ENCODE measurements at regions of chr17 and their contacts with region 1.

Region 1: DNA sequence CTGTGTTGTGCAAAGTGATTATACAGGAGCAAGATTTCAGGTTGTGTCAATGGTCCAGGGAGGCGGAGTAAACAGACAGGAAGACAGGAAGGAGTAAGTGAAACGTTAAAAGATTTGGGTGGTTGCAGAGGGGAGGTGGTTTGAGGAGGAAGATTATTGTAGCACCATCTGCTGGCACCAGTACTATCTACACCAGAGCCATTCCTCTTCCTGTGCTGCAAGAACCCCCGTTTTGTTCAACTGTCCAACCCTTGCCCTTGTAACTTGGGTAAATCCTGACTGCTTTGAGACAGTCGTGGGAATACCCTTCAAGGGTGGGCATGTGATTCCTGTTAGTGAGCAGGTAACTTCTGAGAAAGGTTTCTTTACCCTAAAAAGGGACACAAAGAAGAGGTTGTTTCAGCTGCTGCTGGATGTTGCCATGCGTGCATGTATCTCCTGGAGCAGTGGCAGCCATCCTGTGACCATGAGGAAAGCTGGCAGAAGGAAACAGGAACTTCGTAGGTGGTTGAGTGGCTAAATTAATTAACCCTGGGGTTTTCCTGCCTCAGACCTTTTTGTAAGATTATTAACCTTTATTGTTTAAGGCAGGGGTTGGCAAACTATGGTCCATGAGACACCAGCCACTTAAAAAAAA is 124.1 kb downstream of the PRKCA start:
- DNase-seq: peak in 8 of 9 donors; percentile 31 to 74 (median 64)
- ATAC-seq: peak; percentile 94
- H3K4me3 ChIP-seq: no peak overlapping the region
- H3K4me3 Mint-ChIP-seq: peak overlapping the region in 9 of 10 donors; percentile 4 to 68 (median 47)
- H3K27ac ChIP-seq: peak overlapping the region; percentile 30
- H3K27ac Mint-ChIP-seq: peak overlapping the region; percentile 56 to 91 (median 79)
- H3K4me1 ChIP-seq: peaks cover 0 to 28% of the 10 kb centered on the region in 2 donors
- H3K4me1 Mint-ChIP-seq: peaks cover 54 to 81% (median 72%) of the 10 kb centered on the region in 7 donors
- H3K27me3 ChIP-seq: no peaks in the 10 kb centered on the region
- H3K27me3 Mint-ChIP-seq: no peaks in the 10 kb centered on the region

Region 2: GRCh38 chr17:66248285-66248684 is 178.2 kb before region 1 on chr17:
- CTCF ChIA-PET with region 1: interaction called, 4 read pairs
- POLR2A ChIA-PET with region 1: interaction called, 3 read pairs
- intact Hi-C with region 1: loop called in 1 of 2 experiments (anchors 2 kb)
- DNase-seq: no peak
- ATAC-seq: no peak
- H3K4me3 ChIP-seq: no peak overlapping the region
- H3K4me3 Mint-ChIP-seq: peak overlapping the region in 3 of 10 donors; percentile 17 to 42 (median 25)
- H3K27ac ChIP-seq: no peak overlapping the region
- H3K27ac Mint-ChIP-seq: peak overlapping the region in 3 of 9 donors; percentile 54 to 89 (median 68)
- H3K4me1 ChIP-seq: peaks cover 8 to 27% of the 10 kb centered on the region in 2 donors
- H3K4me1 Mint-ChIP-seq: peaks cover 2 to 58% (median 41%) of the 10 kb centered on the region in 7 donors
- H3K27me3 ChIP-seq: no peaks in the 10 kb centered on the region
- H3K27me3 Mint-ChIP-seq: peaks cover 0 to 2% (median 0%) of the 10 kb centered on the region in 5 donors

Region 3: GRCh38 chr17:66331038-66331816 is 95.3 kb before region 1 on chr17:
- CTCF ChIA-PET with region 1: no interaction called
- POLR2A ChIA-PET with region 1: no interaction called
- intact Hi-C with region 1: loop called (anchors 1 kb)
- DNase-seq: peak in 8 of 9 donors; percentile 32 to 88 (median 76)
- ATAC-seq: peak; percentile 91
- H3K4me3 ChIP-seq: peak overlapping the region; percentile 6
- H3K4me3 Mint-ChIP-seq: peak overlapping the region; percentile 68 to 92 (median 83)
- H3K27ac ChIP-seq: peak overlapping the region; percentile 69
- H3K27ac Mint-ChIP-seq: peak overlapping the region; percentile 88 to 99 (median 95)
- H3K4me1 ChIP-seq: peaks cover 0 to 91% of the 10 kb centered on the region in 2 donors
- H3K4me1 Mint-ChIP-seq: peaks cover 43 to 92% (median 81%) of the 10 kb centered on the region in 7 donors
- H3K27me3 ChIP-seq: no peaks in the 10 kb centered on the region
- H3K27me3 Mint-ChIP-seq: no peaks in the 10 kb centered on the region

Region 4: GRCh38 chr17:66392783-66393437 is 33.6 kb before region 1 on chr17:
- CTCF ChIA-PET with region 1: interaction called, 4 read pairs
- POLR2A ChIA-PET with region 1: interaction called, 3 read pairs
- intact Hi-C with region 1: loop called (anchors 2 to 5 kb)
- DNase-seq: peak in 1 of 9 donors; percentile 8
- ATAC-seq: no peak
- H3K4me3 ChIP-seq: no peak overlapping the region
- H3K4me3 Mint-ChIP-seq: peak overlapping the region in 7 of 10 donors; percentile 49 to 82 (median 58)
- H3K27ac ChIP-seq: no peak overlapping the region
- H3K27ac Mint-ChIP-seq: peak overlapping the region; percentile 54 to 91 (median 77)
- H3K4me1 ChIP-seq: peaks cover 0 to 52% of the 10 kb centered on the region in 2 donors
- H3K4me1 Mint-ChIP-seq: peaks cover 40 to 93% (median 84%) of the 10 kb centered on the region in 7 donors
- H3K27me3 ChIP-seq: no peaks in the 10 kb centered on the region
- H3K27me3 Mint-ChIP-seq: no peaks in the 10 kb centered on the region

Region 5: GRCh38 chr17:66415366-66416206 is 10.9 kb before region 1 on chr17:
- CTCF ChIA-PET with region 1: interaction called, 4 read pairs
- POLR2A ChIA-PET with region 1: no interaction called
- intact Hi-C with region 1: loop called in 1 of 2 experiments (anchors 1 kb)
- DNase-seq: peak in 1 of 9 donors; percentile 29
- ATAC-seq: no peak
- H3K4me3 ChIP-seq: peak overlapping the region; percentile 2
- H3K4me3 Mint-ChIP-seq: peak overlapping the region; percentile 20 to 80 (median 74)
- H3K27ac ChIP-seq: no peak overlapping the region
- H3K27ac Mint-ChIP-seq: peak overlapping the region; percentile 28 to 94 (median 72)
- H3K4me1 ChIP-seq: peaks cover 0 to 54% of the 10 kb centered on the region in 2 donors
- H3K4me1 Mint-ChIP-seq: peaks cover 27 to 87% (median 70%) of the 10 kb centered on the region in 7 donors
- H3K27me3 ChIP-seq: no peaks in the 10 kb centered on the region
- H3K27me3 Mint-ChIP-seq: no peaks in the 10 kb centered on the region

Region 6: GRCh38 chr17:66673668-66674315 is 247.3 kb after region 1 on chr17:
- CTCF ChIA-PET with region 1: no interaction called
- POLR2A ChIA-PET with region 1: no interaction called
- intact Hi-C with region 1: loop called in 1 of 2 experiments (anchors 1 kb)
- DNase-seq: peak in 8 of 9 donors; percentile 32 to 87 (median 78)
- ATAC-seq: peak; percentile 92
- H3K4me3 ChIP-seq: no peak overlapping the region
- H3K4me3 Mint-ChIP-seq: peak overlapping the region; percentile 39 to 84 (median 74)
- H3K27ac ChIP-seq: peak overlapping the region; percentile 59
- H3K27ac Mint-ChIP-seq: peak overlapping the region; percentile 88 to 98 (median 92)
- H3K4me1 ChIP-seq: peaks cover 18 to 45% of the 10 kb centered on the region in 2 donors
- H3K4me1 Mint-ChIP-seq: peaks cover 38 to 79% (median 64%) of the 10 kb centered on the region in 7 donors
- H3K27me3 ChIP-seq: no peaks in the 10 kb centered on the region
- H3K27me3 Mint-ChIP-seq: no peaks in the 10 kb centered on the region

Measured in naive thymus-derived CD4-positive, alpha-beta T cell (primary cell).